Caco-2 (cell line): ENCODE measurements at regions of chr5 and their contacts with region 1.

Region 1: DNA sequence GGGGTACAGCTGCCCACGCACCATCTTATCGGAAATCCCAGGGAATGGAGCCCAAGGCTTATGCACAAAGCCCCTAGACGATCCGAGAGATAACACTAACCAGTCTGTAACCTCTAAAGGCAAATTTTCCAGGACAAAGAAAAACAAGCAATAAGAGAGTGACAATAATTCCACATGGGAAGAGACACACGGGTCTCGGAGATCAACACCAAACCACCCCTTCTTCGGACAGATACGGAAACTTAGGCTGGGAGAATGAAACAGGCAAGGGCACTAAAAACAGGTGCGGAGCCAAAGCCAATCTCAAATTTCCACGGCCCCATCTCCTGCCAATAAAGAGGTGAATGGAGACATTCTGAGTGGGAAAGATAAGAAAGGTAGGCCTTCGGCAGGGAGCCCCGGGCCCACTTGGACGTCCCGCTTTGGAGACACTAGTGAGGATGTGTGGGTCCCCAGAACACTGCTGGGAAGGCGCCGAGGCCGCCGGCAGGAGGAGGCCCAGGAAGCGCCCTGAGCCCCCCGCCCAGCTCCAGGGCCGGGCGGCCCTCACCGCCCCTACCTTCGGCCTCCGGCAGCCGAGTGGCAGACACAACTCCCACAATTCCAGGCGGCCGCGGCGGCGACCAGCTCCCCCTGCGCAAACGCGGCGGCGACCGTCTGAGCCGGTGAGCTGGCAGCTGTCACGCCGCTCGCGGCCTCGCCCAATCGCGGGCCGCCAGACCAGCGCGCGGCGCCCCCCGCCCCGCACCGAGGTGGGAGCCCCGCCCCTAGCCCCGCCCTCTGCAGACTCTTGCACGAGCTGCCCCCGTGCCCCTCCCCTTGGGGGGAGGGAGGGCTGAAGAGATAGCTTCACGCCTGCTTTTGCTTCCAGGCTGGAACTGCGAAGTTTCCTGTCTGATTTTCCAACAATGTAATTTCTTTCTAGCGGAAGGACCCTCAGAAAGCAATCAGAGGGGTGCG is at the start of gene SIL1:
- DNase-seq: peak; percentile 97 to 98
- H3K4me3 ChIP-seq: peak within 1 kb of the TSS; percentile 53
- H3K4me3 Mint-ChIP-seq: peak within 1 kb of the TSS; percentile 96
- H3K27ac Mint-ChIP-seq: peak within 1 kb of the TSS; percentile 98
- H3K4me1 ChIP-seq: no peaks in the 10 kb centered on the region
- H3K4me1 Mint-ChIP-seq: no peaks in the 10 kb centered on the region
- H3K27me3 ChIP-seq: no peaks in the 10 kb centered on the region
- H3K27me3 Mint-ChIP-seq: no peaks in the 10 kb centered on the region
- CTCF ChIP-seq: no peak
- total RNA-seq, gene SIL1: 29.7 and 31.5 TPM in 2 replicates

Region 2: GRCh38 chr5:139164020-139164419 is 34.0 kb before region 1 on chr5:
- CTCF ChIA-PET with region 1: no interaction called
- POLR2A ChIA-PET with region 1: interaction called, 11 read pairs
- intact Hi-C with region 1: no loop called
- DNase-seq: no peak
- H3K4me3 ChIP-seq: no peak overlapping the region
- H3K4me3 Mint-ChIP-seq: no peak overlapping the region
- H3K27ac Mint-ChIP-seq: peak overlapping the region; percentile 58
- H3K4me1 ChIP-seq: peaks cover 28% of the 10 kb centered on the region
- H3K4me1 Mint-ChIP-seq: peaks cover 32% of the 10 kb centered on the region
- H3K27me3 ChIP-seq: no peaks in the 10 kb centered on the region
- H3K27me3 Mint-ChIP-seq: no peaks in the 10 kb centered on the region
- CTCF ChIP-seq: no peak